Esophagus squamous epithelium (tissue), 5 donors: ENCODE measurements at regions of chr5 and their contacts with region 1.

Region 1: DNA sequence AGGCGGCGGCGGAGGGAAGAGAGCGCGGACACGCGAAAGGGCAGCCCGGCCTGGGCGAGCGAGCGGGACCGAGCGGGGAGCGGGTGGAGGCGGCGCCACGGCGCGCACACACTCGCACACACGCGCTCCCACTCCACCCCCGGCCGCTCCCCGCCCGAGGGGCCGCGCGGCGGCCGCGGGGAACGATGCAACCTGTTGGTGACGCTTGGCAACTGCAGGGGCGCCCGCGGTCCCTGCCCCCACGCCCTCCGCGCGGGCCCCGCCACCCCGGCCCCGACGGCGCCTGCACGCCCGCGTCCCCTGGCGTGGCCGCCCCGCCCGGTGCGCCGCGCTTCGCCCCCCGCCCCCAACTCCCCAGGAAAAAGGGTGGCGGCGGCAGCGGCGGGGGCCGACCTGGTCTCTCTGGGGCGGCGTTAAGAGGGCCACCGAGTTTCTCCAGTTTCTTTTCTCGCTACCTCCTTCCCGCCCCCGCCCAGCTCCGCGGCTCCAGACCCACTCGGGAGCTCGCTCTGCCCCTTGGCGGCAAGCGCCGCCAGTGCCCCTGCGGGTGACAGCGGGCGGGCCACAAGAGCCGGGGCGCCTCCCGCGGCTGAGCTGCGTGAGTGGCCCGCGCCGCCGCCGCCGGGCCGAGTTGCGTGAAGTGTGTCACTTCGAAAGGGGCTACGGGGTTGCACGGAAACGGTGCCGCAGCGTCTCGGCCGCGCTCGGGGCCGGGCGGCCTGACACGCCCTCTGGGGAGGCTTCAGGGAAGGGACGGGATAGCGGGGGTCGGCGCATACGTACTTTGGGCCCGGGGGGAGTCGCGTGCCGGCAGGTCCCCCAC is at the start of gene NR3C1:
- DNase-seq: peak; percentile 56
- H3K4me3 ChIP-seq: peak within 1 kb of the TSS; percentile 68 to 96 (median 84)
- H3K27ac ChIP-seq: peak within 1 kb of the TSS; percentile 96 to 99 (median 99)
- H3K4me1 ChIP-seq: peaks cover 12 to 39% (median 16%) of the 10 kb centered on the region in 3 donors
- H3K27me3 ChIP-seq: no peaks in the 10 kb centered on the region
- CTCF ChIP-seq: peak; percentile 10 to 64 (median 46)
- POLR2A ChIP-seq: peak in 2 of 4 donors; percentile 54 to 76
- total RNA-seq, gene NR3C1: 16.7 to 51.1 (median 26.1) TPM

Region 2: GRCh38 chr5:142922223-142922952 is 481.4 kb before region 1 on chr5:
- intact Hi-C with region 1: loop called (anchors 10 kb)
- DNase-seq: no peak
- H3K4me3 ChIP-seq: no peak overlapping the region
- H3K27ac ChIP-seq: no peak overlapping the region
- H3K4me1 ChIP-seq: peaks cover 0 to 25% (median 7%) of the 10 kb centered on the region in 3 donors
- H3K27me3 ChIP-seq: no peaks in the 10 kb centered on the region
- CTCF ChIP-seq: peak; percentile 12 to 64 (median 43)
- POLR2A ChIP-seq: no peak

Region 3: GRCh38 chr5:143016777-143017516 is 386.9 kb before region 1 on chr5:
- intact Hi-C with region 1: loop called (anchors 10 kb)
- DNase-seq: no peak
- H3K4me3 ChIP-seq: no peak overlapping the region
- H3K27ac ChIP-seq: no peak overlapping the region
- H3K4me1 ChIP-seq: peaks cover 0 to 10% (median 0%) of the 10 kb centered on the region in 3 donors
- H3K27me3 ChIP-seq: no peaks in the 10 kb centered on the region
- CTCF ChIP-seq: peak in 4 of 6 experiments; percentile 35 to 62 (median 40)
- POLR2A ChIP-seq: no peak

Region 4: DNA sequence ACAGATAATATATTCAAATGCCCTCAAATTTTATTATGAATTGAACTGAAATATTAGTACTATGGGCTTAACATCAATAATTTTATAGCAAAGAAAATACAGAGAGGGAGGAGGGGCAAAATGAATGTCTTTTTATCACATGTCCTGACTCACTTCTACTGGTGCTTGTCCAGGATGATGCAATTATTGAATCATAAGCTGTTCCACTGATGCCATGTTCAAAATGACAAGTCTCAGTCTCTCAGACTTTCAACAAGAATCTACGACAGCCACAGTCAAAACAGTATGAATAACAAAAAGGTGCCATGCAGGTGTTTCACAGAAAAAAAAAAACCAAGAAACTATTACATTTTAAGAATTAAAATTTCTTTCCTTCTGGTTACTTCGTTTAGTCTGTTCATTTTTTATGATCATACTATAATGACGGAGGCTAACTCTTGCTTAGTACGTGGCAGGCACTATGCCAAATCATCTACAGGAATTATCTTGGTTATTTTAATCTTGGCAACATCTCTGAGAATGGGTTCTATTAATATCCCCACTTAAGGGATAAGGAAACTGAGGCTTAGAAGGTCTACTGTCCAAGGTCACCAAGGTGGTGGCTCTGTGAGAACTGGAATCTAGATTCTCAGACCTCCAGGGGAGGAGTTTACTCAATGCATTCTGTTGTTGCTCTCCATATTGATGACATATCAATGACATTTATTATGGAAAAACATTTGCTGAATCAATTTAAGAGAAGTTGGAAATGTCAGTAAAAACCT is 61.8 kb before region 1 on chr5:
- intact Hi-C with region 1: no loop called
- DNase-seq: no peak
- H3K4me3 ChIP-seq: no peak overlapping the region
- H3K27ac ChIP-seq: peak overlapping the region in 2 of 4 donors; percentile 25 to 56
- H3K4me1 ChIP-seq: peaks cover 0 to 48% (median 10%) of the 10 kb centered on the region in 3 donors
- H3K27me3 ChIP-seq: no peaks in the 10 kb centered on the region
- CTCF ChIP-seq: no peak
- POLR2A ChIP-seq: no peak

Region 5: DNA sequence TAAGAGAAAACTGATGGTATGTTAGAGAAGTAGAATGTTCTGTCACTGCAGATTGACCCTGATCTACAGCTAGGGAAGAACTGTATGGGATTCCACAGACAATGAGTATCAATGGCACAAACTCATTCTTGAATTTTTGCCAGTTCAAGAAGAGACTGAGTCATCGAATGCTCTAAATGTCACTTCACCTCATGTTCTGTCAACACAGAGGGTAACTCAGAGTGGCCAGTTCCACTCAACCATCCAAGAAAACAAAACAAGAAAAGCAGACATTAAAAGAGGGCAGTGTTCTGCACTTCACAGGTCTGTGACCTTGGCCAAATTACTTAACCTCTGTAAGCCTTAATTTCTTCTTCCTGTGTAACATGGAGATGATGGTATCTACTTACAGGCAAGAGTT is 276.0 kb after region 1 on chr5:
- intact Hi-C with region 1: no loop called
- DNase-seq: no peak
- H3K4me3 ChIP-seq: no peak overlapping the region
- H3K27ac ChIP-seq: no peak overlapping the region
- H3K4me1 ChIP-seq: peaks cover 0 to 15% (median 8%) of the 10 kb centered on the region in 3 donors
- H3K27me3 ChIP-seq: no peaks in the 10 kb centered on the region
- CTCF ChIP-seq: no peak
- POLR2A ChIP-seq: no peak

Region 6: GRCh38 chr5:143824851-143825720 is 421.3 kb after region 1 on chr5:
- intact Hi-C with region 1: loop called (anchors 10 kb)
- DNase-seq: peak; percentile 3
- H3K4me3 ChIP-seq: no peak overlapping the region
- H3K27ac ChIP-seq: no peak overlapping the region
- H3K4me1 ChIP-seq: peaks cover 0 to 8% (median 0%) of the 10 kb centered on the region in 3 donors
- H3K27me3 ChIP-seq: no peaks in the 10 kb centered on the region
- CTCF ChIP-seq: peak; percentile 91 to 97 (median 94)
- POLR2A ChIP-seq: no peak